H1 (cell line): ENCODE measurements at regions of chr1 and their contacts with region 1.

Region 1: DNA sequence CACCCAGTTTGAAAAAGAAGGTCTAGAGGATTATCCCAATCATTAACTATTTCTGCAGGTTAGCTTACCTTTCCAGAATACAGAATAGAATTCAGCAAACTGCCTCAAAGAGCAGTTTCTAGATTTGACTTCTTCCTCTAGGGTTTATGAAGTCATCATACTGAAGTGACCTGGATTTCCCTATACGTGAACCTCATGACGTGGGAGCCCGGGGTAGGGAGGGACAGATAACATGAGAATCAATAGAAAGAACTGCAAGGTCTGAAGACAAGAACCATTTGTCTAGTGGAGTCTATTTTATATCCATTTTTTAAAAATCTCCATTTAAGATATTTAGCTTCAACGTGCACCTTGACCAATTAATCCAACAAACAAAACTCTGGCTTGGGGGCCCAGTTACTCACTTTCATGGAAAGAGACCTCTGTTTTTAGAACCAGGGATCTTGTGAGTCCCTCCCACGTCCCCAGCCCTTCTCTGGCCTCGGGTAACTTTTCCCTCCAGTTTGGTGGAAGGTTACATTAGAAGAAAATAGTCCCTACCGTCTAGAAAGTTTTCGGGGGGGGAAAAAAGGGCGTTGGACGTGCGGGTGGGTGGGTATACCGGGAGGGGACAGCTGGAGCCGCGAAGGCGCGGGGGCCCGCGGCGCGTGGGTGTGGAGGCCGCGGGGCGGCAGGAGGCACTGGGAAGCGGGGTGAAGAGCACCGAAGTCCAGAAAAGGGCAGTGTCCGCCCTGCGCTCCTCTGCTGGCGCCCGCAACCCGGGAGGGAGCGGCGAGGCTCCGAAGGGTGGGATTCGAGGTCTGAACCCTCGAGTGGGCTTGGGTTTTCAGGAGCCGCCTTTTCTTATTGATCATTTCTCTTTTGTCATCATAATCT is 13.8 kb upstream of the POGZ start:
- DNase-seq: peak in 1 of 2 experiments; percentile 73
- H3K4me3 ChIP-seq: peak overlapping the region; percentile 42 to 66 (median 50)
- H3K27ac ChIP-seq: no peak overlapping the region; the same call in 1 of the 2 replicates
- H3K4me1 ChIP-seq: no peaks in the 10 kb centered on the region; a peak in 2 of 7 replicates
- H3K27me3 ChIP-seq: no peaks in the 10 kb centered on the region
- CTCF ChIP-seq: no peak
- EP300 ChIP-seq: no peak
- POLR2A ChIP-seq: peak; percentile 40 to 49
- RAD21 ChIP-seq: no peak

Region 2: GRCh38 chr1:151198255-151199127 is 274.6 kb before region 1 on chr1 and contains the start of gene PIP5K1A:
- CTCF ChIA-PET with region 1: no interaction called
- POLR2A ChIA-PET with region 1: no interaction called
- DNase-seq: peak; percentile 75 to 98
- H3K4me3 ChIP-seq: peak within 1 kb of the TSS; percentile 74 to 99 (median 93)
- H3K27ac ChIP-seq: peak within 1 kb of the TSS; percentile 85
- H3K4me1 ChIP-seq: peaks cover 2 to 4% (median 3%) of the 10 kb centered on the region in 4 experiments; a peak in 3 of 7 replicates
- H3K27me3 ChIP-seq: no peaks in the 10 kb centered on the region
- CTCF ChIP-seq: no peak
- EP300 ChIP-seq: no peak
- POLR2A ChIP-seq: peak; percentile 66 to 69; a peak in 2 of 3 replicates
- RAD21 ChIP-seq: no peak
- total RNA-seq, gene PIP5K1A: 72.5 and 87.5 TPM in 2 replicates

Region 3: GRCh38 chr1:151459331-151460046 is 13.6 kb before region 1 on chr1 and contains the start of gene POGZ:
- CTCF ChIA-PET with region 1: interaction called, 5 read pairs
- POLR2A ChIA-PET with region 1: interaction called, 91 read pairs
- DNase-seq: peak; percentile 75 to 94
- H3K4me3 ChIP-seq: peak within 1 kb of the TSS; percentile 59 to 80 (median 75)
- H3K27ac ChIP-seq: peak within 1 kb of the TSS; percentile 86
- H3K4me1 ChIP-seq: peaks cover 0 to 11% (median 2%) of the 10 kb centered on the region in 4 experiments; a peak in 3 of 7 replicates
- H3K27me3 ChIP-seq: no peaks in the 10 kb centered on the region; a peak in 2 of 7 replicates
- CTCF ChIP-seq: no peak
- EP300 ChIP-seq: peak in 1 of 2 experiments; percentile 38; a peak in 1 of 3 replicates
- POLR2A ChIP-seq: peak; percentile 70 to 72
- RAD21 ChIP-seq: no peak
- total RNA-seq, gene POGZ: 105 and 109 TPM in 2 replicates

Region 4: GRCh38 chr1:151485685-151486255 is 12.7 kb after region 1 on chr1:
- CTCF ChIA-PET with region 1: interaction called, 11 read pairs
- POLR2A ChIA-PET with region 1: interaction called, 3 read pairs
- DNase-seq: no peak
- H3K4me3 ChIP-seq: no peak overlapping the region
- H3K27ac ChIP-seq: no peak overlapping the region
- H3K4me1 ChIP-seq: no peaks in the 10 kb centered on the region
- H3K27me3 ChIP-seq: no peaks in the 10 kb centered on the region
- CTCF ChIP-seq: peak; percentile 39 to 54 (median 46)
- EP300 ChIP-seq: no peak
- POLR2A ChIP-seq: no peak
- RAD21 ChIP-seq: peak; percentile 30 to 62; a peak in 3 of 4 replicates

Region 5: GRCh38 chr1:151510957-151511635 is 38.0 kb after region 1 on chr1 and contains the start of gene CGN:
- CTCF ChIA-PET with region 1: interaction called, 3 read pairs
- POLR2A ChIA-PET with region 1: interaction called, 12 read pairs
- DNase-seq: peak; percentile 88 to 93
- H3K4me3 ChIP-seq: peak within 1 kb of the TSS; percentile 80 to 85 (median 84)
- H3K27ac ChIP-seq: peak within 1 kb of the TSS; percentile 90
- H3K4me1 ChIP-seq: peaks cover 19 to 33% (median 21%) of the 10 kb centered on the region in 4 experiments
- H3K27me3 ChIP-seq: 0 out of 7 replicates have a peak, but pooled peaks cover 0 to 3% (median 0%) of the 10 kb centered on the region in 4 experiments
- CTCF ChIP-seq: no peak
- EP300 ChIP-seq: no peak
- POLR2A ChIP-seq: peak; percentile 82 to 85
- RAD21 ChIP-seq: no peak
- total RNA-seq, gene CGN: 52.7 and 54.6 TPM in 2 replicates